ENCODE measurements at regions of chrX and their contacts with region 1.

Region 1: DNA sequence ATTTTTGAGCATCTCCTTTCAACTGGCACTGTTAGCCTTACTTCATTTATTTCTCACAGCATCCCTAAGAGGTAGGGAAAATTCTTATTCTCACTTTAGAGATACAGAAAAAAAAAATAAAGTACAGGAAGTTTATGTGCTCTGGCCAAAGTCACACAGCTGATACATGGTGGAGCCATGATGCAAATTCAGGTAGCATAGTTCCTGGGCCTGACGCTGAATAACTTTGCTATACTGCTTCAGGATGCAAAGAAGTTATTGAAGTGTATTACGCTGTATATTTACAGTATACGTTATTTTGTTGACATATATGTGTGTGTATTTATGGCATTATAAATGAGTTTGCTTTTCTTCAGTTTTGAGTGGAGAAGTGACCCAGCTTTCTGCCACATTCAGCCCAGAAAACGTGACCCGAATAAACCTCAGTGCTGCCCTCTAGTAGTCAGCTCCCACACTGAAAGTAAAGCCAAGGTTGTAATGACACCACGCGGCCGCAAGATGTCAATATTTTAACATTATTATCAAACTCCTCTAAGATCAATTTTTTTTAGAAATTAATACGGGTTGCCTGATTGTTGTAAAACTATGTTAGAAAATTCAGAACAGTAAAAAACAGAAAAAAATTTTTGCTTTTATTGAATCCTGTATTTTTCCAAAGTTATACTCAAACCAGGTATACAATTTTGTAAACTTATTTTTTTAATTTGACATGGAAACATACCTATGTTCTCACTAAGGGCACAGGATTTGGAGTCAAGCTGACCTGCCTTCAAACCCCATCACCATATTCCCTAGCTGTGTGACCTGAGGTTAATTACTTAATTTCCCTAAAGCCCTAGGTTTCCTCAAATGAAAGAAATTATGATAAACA is 3.8 kb upstream of the GUCY2F start:
- ATAC-seq: peak in 4 of 8 experiments; percentile 29 to 43 (median 33)
- H3K4me3 ChIP-seq: no peak overlapping the region
- H3K27ac ChIP-seq: no peak overlapping the region
- H3K4me1 ChIP-seq: no peaks in the 10 kb centered on the region

Region 2: DNA sequence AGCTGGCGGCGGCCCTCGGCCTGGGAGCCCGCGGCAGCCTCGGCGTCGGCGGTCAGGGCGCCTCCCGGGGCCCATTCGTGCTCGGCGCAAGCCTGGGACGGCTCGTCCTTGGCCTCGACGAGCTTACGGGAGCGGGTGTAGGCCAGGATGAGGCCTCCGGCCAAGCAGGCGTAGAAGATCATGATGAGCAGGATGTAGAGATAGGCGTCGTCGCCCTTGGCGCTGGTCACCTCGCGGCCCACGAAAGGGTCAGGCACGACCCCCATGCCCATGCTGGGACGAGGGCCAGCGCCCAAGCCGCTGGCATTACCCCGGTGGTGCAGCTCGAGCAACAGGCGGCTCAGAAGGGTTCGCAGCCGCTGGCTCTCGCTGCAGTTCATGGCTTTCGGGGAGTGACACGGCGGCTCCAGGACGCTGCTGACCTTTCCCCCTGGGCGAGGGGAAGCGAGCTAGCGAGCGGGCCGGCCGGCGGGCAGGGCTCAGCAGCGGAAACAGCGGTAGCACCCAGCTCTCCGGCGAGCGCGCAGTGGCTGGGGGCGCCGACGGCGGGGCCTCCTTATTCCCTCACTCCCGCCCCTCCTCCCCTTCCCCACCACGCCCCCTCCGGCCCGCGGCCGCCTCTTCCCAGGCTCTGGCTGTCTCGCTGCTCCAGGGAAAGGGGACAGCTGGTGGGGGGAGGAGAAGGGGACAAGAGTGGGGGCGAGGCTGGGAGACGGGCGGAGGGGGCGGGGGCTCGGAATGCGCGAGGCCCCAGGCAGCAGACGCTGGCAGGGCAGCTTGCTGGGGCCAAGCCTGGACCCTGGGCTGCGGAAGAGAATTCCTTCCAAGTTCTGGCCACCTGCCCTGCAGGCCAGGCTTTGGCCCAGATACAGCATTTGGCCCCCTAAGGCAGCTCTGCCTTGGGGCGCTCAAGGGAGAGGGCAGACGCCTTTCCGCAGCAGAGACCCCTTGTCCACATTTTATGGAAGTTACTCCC is 139.2 kb after region 1 on chrX and contains the start of gene KCNE5:
- in situ Hi-C with region 1: loop called in 2 of 9 experiments (anchors 10 to 25 kb)
- ATAC-seq: peak in 5 of 8 experiments; percentile 31 to 77 (median 72)
- H3K4me3 ChIP-seq: no peak within 1 kb of the TSS
- H3K27ac ChIP-seq: no peak within 1 kb of the TSS
- H3K4me1 ChIP-seq: no peaks in the 10 kb centered on the region
- total RNA-seq, gene KCNE5: 0.29 to 0.62 (median 0.35) TPM in 4 of 8 experiments, not detected in the others

Region 3: DNA sequence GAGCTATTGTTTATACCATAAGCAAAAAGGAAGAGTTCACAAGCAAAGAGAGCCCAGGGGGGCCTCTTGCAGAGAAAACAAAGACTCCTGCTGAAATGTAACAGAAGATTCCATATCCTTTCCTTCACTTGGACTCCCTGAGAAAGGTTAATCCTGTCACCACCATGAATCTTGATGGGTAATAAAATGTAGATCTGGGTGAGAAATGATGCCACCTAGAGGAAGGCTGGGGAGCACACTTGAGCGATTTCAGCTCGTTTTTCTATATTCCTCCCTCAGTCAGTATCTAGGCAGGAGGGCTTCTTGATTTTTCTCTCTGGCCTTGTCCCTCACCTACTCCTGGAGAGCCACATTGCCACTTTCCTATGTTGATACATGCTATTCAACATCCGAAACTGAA is 149.5 kb after region 1 on chrX:
- in situ Hi-C with region 1: loop called in 1 of 9 experiments (anchors 25 kb)
- ATAC-seq: peak in 3 of 8 experiments; percentile 33 to 49 (median 41)
- H3K4me3 ChIP-seq: no peak overlapping the region
- H3K27ac ChIP-seq: no peak overlapping the region
- H3K4me1 ChIP-seq: no peaks in the 10 kb centered on the region

Region 4: DNA sequence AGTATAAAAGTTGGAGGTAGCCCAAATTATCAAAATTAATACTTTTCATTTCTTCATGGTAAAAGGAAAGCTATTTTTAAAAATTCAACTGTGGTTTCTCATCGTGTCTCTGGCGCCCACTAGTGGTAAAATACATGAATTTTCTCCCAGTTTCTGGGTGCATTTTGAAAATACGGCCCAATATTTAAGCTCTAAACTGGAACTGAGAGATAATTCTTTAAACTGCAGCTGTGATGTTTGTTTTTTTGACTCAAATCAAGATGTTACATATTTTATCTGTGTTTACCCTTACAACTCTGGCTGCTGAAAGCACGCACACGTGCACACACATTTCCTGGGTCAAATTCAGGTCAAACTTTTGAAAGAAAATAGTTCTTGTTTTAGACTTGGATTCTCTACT is 371.3 kb after region 1 on chrX:
- in situ Hi-C with region 1: loop called in 1 of 9 experiments (anchors 25 kb)
- ATAC-seq: no peak
- H3K4me3 ChIP-seq: no peak overlapping the region
- H3K27ac ChIP-seq: no peak overlapping the region
- H3K4me1 ChIP-seq: no peaks in the 10 kb centered on the region

Region 5: DNA sequence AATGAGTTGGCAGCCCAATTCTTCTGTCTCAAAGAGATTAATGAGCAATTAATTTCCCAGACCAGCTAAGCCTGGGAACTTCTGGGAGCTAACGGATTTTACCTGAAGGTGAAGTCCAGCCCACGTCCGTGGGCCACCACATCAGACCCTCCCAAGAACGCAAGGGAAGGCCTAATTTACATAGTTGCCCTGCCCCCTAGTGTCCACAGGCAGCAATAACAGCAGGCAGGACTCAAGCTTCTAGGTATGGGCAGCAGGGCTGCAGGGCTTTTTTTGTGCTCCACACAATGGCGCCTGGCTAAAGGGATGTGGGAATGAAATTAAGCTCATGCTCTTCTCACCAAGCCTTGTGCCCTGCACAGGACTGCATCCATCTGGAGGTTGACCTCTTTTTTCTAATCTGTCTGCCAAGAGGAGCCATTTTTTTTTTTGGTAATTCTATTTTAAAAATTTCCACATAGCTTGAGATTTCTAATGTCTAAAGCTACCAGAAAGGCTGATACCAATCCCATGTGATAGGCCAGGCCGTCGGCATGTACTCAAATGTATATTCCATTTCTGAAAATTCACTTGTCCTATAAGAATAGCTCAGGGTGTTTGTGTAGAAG is 405.3 kb after region 1 on chrX:
- in situ Hi-C with region 1: loop called in 1 of 9 experiments (anchors 25 kb)
- ATAC-seq: peak; percentile 23 to 76 (median 57)
- H3K4me3 ChIP-seq: no peak overlapping the region
- H3K27ac ChIP-seq: no peak overlapping the region
- H3K4me1 ChIP-seq: no peaks in the 10 kb centered on the region

Measured in motor neuron (in vitro differentiated cells).